ENCODE measurements at regions of chr12 and their contacts with region 1.

Region 1: GRCh38 chr12:122421821-122422729 is at the start of gene CLIP1:
- DNase-seq: peak; percentile 71
- ATAC-seq: peak; percentile 67
- H3K4me3 Mint-ChIP-seq: peak within 1 kb of the TSS; percentile 91
- H3K27ac Mint-ChIP-seq: peak within 1 kb of the TSS; percentile 90
- H3K4me1 Mint-ChIP-seq: peaks cover 59% of the 10 kb centered on the region
- H3K27me3 Mint-ChIP-seq: no peaks in the 10 kb centered on the region
- CTCF ChIP-seq: no peak
- total RNA-seq, gene CLIP1: 58.6 and 63.2 TPM in 2 replicates

Region 2: DNA sequence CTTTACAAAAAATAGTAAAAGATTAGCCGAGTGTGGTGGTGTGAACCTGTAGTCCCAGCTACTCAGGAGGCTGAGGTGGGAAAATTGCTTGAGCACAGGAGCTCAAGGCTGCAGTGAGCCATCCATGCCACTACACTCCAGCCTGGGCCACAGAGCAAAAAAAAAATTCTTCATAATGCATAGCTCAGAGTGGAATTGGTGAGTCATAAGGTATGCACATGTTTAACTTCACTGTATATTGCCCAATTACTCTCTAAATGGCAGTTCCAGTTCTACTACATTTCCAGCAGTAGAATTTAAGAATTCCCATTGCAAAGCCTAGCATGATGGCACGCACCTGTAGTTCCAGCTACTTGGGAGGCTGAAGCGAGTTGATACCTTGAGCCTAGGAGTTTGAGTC is 27.3 kb after region 1 on chr12:
- CTCF ChIA-PET with region 1: interaction called, 3 read pairs
- POLR2A ChIA-PET with region 1: interaction called, 4 read pairs
- intact Hi-C with region 1: loop called (anchors 1 kb)
- DNase-seq: no peak
- ATAC-seq: no peak
- H3K4me3 Mint-ChIP-seq: no peak overlapping the region
- H3K27ac Mint-ChIP-seq: no peak overlapping the region
- H3K4me1 Mint-ChIP-seq: peaks cover 17% of the 10 kb centered on the region
- H3K27me3 Mint-ChIP-seq: no peaks in the 10 kb centered on the region
- CTCF ChIP-seq: no peak

Region 3: DNA sequence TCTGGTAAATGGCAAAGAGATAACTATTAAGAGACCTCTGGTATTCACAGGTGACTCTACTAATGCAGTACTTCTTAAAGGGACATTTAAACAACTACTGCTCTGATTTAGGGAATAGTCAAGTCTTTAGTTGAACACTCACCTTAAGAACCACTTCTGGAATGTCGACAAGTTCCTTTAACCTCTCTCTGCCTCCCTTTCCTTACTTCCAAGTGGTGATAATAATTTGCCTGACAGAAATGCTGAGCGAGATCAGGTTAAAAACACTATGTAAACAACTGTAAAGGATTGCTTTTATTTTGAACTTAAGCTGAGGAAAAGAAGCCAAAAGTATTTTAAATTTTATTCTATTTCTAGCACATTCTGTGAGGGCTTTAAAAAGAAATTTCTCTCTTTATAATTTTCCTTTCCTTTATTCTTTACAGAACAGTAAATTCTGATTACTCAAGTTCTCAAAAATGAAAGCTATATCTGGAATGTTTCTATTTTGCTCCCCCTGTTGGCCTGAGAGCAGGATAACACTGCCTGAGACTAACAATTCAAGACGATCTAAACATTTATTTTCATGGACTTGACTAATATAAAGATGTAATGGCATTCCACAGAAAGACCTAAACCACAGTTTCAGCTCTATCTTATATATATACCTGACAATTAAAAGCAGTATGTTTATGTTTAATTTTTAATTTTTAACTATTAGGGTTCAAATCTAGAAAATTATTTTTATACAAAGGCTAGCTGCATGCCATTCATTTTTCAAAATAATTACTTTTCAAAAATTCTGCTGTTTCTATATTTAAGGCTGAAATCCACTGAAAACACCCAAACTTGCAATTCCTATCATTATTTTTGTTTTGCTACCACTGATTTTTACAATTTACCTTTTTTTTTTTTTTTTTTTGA is 49.5 kb after region 1 on chr12:
- CTCF ChIA-PET with region 1: interaction called, 7 read pairs
- POLR2A ChIA-PET with region 1: interaction called, 5 read pairs
- intact Hi-C with region 1: loop called (anchors 1 kb)
- DNase-seq: no peak
- ATAC-seq: peak; percentile 70
- H3K4me3 Mint-ChIP-seq: no peak overlapping the region
- H3K27ac Mint-ChIP-seq: no peak overlapping the region
- H3K4me1 Mint-ChIP-seq: peaks cover 13% of the 10 kb centered on the region
- H3K27me3 Mint-ChIP-seq: no peaks in the 10 kb centered on the region
- CTCF ChIP-seq: peak; percentile 59

Region 4: GRCh38 chr12:122984612-122985337 is 562.7 kb after region 1 on chr12:
- CTCF ChIA-PET with region 1: no interaction called
- POLR2A ChIA-PET with region 1: no interaction called
- intact Hi-C with region 1: no loop called
- DNase-seq: no peak
- ATAC-seq: no peak
- H3K4me3 Mint-ChIP-seq: no peak overlapping the region
- H3K27ac Mint-ChIP-seq: peak overlapping the region; percentile 50
- H3K4me1 Mint-ChIP-seq: peaks cover 35% of the 10 kb centered on the region
- H3K27me3 Mint-ChIP-seq: no peaks in the 10 kb centered on the region
- CTCF ChIP-seq: no peak

Measured in activated B cell treated with CpG ODN at 0.5 μM for 24 hours (primary cell).